ENCODE measurements at regions of chr11 and their contacts with region 1.

Region 1: DNA sequence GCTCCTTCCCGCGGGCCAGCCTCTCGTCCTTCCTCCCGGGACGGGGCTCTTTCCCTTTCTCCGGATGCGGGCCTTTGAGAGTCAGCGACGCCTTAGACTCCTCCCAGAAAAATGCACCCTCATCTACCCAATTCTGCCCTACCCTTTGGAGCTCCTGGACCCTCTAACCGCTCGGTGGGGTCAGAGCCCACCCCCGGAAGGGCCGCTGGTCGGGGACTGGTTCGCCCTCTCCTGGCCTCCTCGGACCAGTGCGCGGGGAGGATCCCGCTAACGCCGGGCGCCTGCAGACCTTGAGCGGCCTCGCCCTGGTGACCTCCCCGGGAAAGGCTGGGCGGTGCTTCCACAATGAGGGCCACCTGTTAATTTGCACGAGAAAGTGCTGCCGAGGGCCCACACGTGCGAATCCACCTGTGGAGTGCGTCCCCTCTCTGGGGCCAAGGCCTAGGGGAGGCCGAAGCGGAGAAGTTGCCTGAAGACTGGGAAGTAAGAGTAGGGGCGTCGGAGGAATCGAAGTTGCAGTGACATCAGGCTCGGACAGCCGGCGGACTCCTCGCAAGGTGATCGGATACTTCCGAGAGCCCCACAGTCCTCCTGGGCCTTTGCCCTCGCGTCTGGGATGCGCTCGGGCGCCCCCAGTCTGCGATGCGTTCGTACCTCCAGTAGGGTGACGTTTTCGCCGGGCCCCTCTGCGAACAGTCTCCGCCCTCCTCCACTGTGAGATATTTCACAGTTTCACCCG is 61.5 kb downstream of the ENDOD1 start:
- DNase-seq: peak; percentile 83 to 96 (median 91)
- ATAC-seq: peak; percentile 94
- H3K4me3 ChIP-seq: peak overlapping the region; percentile 64 to 82
- H3K4me3 Mint-ChIP-seq: peak overlapping the region; percentile 85
- H3K27ac ChIP-seq: peak overlapping the region; percentile 66 to 69
- H3K27ac Mint-ChIP-seq: peak overlapping the region; percentile 91
- H3K4me1 ChIP-seq: peaks cover 24% of the 10 kb centered on the region
- H3K4me1 Mint-ChIP-seq: peaks cover 35% of the 10 kb centered on the region
- H3K27me3 ChIP-seq: no peaks in the 10 kb centered on the region
- H3K27me3 Mint-ChIP-seq: peaks cover 4% of the 10 kb centered on the region
- CTCF ChIP-seq: peak; percentile 92

Region 2: DNA sequence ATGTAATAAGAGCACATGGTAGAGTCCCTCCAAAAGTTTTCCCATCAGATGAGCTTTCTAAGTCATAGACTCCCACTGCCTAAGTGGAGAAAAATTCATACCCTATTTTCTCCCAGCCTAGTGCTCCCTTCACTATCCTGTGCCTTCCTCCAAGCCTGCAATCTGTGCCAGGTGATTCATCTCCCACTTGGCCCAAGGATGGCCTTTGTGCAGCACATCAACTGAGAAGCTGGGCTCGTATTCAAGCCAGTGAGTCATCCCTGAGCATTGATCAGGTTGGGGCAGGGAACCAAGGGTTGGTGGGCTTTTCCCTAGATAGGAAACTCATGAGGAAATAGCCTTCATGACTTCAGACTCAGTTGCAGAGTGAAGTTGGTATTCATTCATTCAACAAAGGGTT is 957.8 kb before region 1 on chr11:
- CTCF ChIA-PET with region 1: no interaction called
- POLR2A ChIA-PET with region 1: no interaction called
- intact Hi-C with region 1: no loop called
- DNase-seq: no peak
- ATAC-seq: no peak
- H3K4me3 ChIP-seq: no peak overlapping the region
- H3K4me3 Mint-ChIP-seq: no peak overlapping the region
- H3K27ac ChIP-seq: no peak overlapping the region
- H3K27ac Mint-ChIP-seq: no peak overlapping the region
- H3K4me1 ChIP-seq: no peaks in the 10 kb centered on the region
- H3K4me1 Mint-ChIP-seq: no peaks in the 10 kb centered on the region
- H3K27me3 ChIP-seq: no peaks in the 10 kb centered on the region
- H3K27me3 Mint-ChIP-seq: no peaks in the 10 kb centered on the region
- CTCF ChIP-seq: no peak

Region 3: DNA sequence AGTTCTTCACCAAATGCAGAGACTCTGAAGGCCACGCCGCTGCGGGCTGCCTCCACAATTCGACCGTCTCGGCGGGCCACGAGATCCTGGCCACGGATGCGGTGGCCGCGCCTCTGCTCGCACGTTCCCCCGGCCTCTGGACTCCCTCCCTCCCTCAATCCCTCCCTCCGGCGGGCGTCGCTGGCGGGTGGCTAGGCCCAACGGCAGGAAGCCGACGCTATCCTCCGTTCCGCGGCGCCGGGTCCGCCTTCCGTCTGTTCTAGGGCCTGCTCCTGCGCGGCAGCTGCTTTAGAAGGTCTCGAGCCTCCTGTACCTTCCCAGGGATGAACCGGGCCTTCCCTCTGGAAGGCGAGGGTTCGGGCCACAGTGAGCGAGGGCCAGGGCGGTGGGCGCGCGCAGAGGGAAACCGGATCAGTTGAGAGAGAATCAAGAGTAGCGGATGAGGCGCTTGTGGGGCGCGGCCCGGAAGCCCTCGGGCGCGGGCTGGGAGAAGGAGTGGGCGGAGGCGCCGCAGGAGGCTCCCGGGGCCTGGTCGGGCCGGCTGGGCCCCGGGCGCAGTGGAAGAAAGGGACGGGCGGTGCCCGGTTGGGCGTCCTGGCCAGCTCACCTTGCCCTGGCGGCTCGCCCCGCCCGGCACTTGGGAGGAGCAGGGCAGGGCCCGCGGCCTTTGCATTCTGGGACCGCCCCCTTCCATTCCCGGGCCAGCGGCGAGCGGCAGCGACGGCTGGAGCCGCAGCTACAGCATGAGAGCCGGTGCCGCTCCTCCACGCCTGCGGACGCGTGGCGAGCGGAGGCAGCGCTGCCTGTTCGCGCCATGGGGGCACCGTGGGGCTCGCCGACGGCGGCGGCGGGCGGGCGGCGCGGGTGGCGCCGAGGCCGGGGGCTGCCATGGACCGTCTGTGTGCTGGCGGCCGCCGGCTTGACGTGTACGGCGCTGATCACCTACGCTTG is 607.1 kb before region 1 on chr11 and contains the start of gene FUT4:
- CTCF ChIA-PET with region 1: no interaction called
- POLR2A ChIA-PET with region 1: no interaction called
- intact Hi-C with region 1: loop called in 1 of 2 experiments (anchors 10 kb)
- DNase-seq: peak; percentile 26 to 82 (median 69)
- ATAC-seq: peak; percentile 76
- H3K4me3 ChIP-seq: peak within 1 kb of the TSS; percentile 65 to 77
- H3K4me3 Mint-ChIP-seq: peak within 1 kb of the TSS; percentile 99
- H3K27ac ChIP-seq: peak within 1 kb of the TSS; percentile 87 to 90
- H3K27ac Mint-ChIP-seq: peak within 1 kb of the TSS; percentile 100
- H3K4me1 ChIP-seq: peaks cover 22% of the 10 kb centered on the region
- H3K4me1 Mint-ChIP-seq: peaks cover 39% of the 10 kb centered on the region
- H3K27me3 ChIP-seq: no peaks in the 10 kb centered on the region
- H3K27me3 Mint-ChIP-seq: no peaks in the 10 kb centered on the region
- CTCF ChIP-seq: no peak
- total RNA-seq, gene FUT4: 4.7 to 5.2 TPM

Region 4: DNA sequence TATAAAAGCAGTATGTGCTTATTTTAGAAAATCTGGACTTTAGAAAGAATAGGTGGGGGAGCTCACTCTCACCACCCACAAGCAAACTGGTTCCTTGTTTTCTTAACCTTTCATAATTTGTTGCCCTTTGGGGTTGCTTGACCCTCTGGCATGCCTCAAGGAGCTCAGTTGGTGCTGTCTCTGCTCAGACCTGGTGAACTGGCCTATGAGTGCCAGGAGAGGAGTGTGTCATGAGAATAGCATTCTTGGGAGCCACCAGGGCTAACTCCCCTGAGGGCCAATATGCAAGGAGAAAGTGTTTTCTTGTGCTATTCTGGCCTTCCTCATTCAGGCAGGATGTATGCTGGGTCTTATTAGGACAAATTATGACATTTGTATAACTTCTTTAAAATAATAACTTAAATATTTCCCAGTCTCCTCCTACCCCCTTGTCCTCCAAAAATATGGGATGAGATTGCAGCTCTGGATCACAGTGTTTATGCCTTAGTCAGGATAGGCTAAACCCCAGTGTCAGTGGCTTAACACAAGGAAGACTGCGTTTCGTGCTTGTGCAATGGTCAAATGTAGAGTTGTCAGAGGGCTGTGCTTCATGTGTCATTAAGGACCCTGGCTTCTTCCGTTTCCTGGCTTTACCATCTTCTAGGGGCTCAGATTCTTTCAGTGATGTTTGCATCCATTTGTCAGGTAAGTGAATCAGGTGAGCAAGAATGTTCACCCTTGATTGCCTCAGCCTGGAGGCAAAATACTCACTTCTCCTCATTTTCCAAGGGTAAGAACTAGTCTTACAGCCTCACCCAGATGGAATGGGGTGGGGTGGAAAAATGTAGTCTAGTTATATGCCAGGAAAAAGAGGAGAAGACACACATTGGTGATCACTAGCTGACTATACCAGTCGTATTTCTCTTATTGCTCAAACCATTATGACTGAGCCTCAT is 403.7 kb before region 1 on chr11:
- CTCF ChIA-PET with region 1: no interaction called
- POLR2A ChIA-PET with region 1: no interaction called
- intact Hi-C with region 1: no loop called
- DNase-seq: no peak
- ATAC-seq: no peak
- H3K4me3 ChIP-seq: no peak overlapping the region
- H3K4me3 Mint-ChIP-seq: no peak overlapping the region
- H3K27ac ChIP-seq: no peak overlapping the region
- H3K27ac Mint-ChIP-seq: no peak overlapping the region
- H3K4me1 ChIP-seq: no peaks in the 10 kb centered on the region
- H3K4me1 Mint-ChIP-seq: no peaks in the 10 kb centered on the region
- H3K27me3 ChIP-seq: no peaks in the 10 kb centered on the region
- H3K27me3 Mint-ChIP-seq: peaks cover 39% of the 10 kb centered on the region
- CTCF ChIP-seq: no peak

Region 5: DNA sequence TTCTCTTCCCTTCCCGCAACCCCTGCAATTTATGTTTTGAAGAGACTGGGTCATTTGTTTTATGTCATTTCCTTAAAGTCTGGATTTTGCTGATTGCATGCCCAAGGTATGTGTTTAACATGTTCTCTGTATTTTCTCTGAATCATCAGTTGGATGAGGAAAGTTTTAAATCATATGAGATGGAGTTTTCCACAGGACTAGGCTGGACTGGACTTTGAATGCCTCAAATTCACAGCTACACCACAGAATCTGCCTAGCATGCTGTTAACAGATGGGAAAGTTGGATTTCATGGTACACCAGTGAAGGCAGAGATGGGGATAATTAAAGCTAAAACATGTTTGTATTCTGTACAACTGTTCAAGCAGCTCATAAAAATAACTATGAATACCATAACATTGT is 240.3 kb before region 1 on chr11:
- CTCF ChIA-PET with region 1: no interaction called
- POLR2A ChIA-PET with region 1: no interaction called
- intact Hi-C with region 1: no loop called
- DNase-seq: no peak
- ATAC-seq: no peak
- H3K4me3 ChIP-seq: no peak overlapping the region
- H3K4me3 Mint-ChIP-seq: no peak overlapping the region
- H3K27ac ChIP-seq: no peak overlapping the region
- H3K27ac Mint-ChIP-seq: no peak overlapping the region
- H3K4me1 ChIP-seq: no peaks in the 10 kb centered on the region
- H3K4me1 Mint-ChIP-seq: no peaks in the 10 kb centered on the region
- H3K27me3 ChIP-seq: no peaks in the 10 kb centered on the region
- H3K27me3 Mint-ChIP-seq: no peaks in the 10 kb centered on the region
- CTCF ChIP-seq: no peak

Region 6: GRCh38 chr11:95089620-95090542 is 61.2 kb before region 1 on chr11 and contains the start of gene ENDOD1:
- CTCF ChIA-PET with region 1: interaction called, 10 read pairs
- POLR2A ChIA-PET with region 1: interaction called, 20 read pairs
- intact Hi-C with region 1: loop called (anchors 1 kb)
- DNase-seq: peak; percentile 75 to 92 (median 83)
- ATAC-seq: peak; percentile 94
- H3K4me3 ChIP-seq: peak within 1 kb of the TSS; percentile 66 to 78
- H3K4me3 Mint-ChIP-seq: peak within 1 kb of the TSS; percentile 93
- H3K27ac ChIP-seq: peak within 1 kb of the TSS; percentile 77 to 84
- H3K27ac Mint-ChIP-seq: peak within 1 kb of the TSS; percentile 99
- H3K4me1 ChIP-seq: peaks cover 25% of the 10 kb centered on the region
- H3K4me1 Mint-ChIP-seq: peaks cover 50% of the 10 kb centered on the region
- H3K27me3 ChIP-seq: no peaks in the 10 kb centered on the region
- H3K27me3 Mint-ChIP-seq: no peaks in the 10 kb centered on the region
- CTCF ChIP-seq: no peak
- total RNA-seq, gene ENDOD1: 5.6 to 5.9 TPM

Region 7: GRCh38 chr11:95725196-95725595 is 574.1 kb after region 1 on chr11:
- CTCF ChIA-PET with region 1: interaction called, 11 read pairs
- POLR2A ChIA-PET with region 1: no interaction called
- intact Hi-C with region 1: no loop called
- DNase-seq: no peak
- ATAC-seq: no peak
- H3K4me3 ChIP-seq: no peak overlapping the region
- H3K4me3 Mint-ChIP-seq: no peak overlapping the region
- H3K27ac ChIP-seq: no peak overlapping the region
- H3K27ac Mint-ChIP-seq: no peak overlapping the region
- H3K4me1 ChIP-seq: no peaks in the 10 kb centered on the region
- H3K4me1 Mint-ChIP-seq: peaks cover 4% of the 10 kb centered on the region
- H3K27me3 ChIP-seq: no peaks in the 10 kb centered on the region
- H3K27me3 Mint-ChIP-seq: peaks cover 4% of the 10 kb centered on the region
- CTCF ChIP-seq: no peak

Region 8: DNA sequence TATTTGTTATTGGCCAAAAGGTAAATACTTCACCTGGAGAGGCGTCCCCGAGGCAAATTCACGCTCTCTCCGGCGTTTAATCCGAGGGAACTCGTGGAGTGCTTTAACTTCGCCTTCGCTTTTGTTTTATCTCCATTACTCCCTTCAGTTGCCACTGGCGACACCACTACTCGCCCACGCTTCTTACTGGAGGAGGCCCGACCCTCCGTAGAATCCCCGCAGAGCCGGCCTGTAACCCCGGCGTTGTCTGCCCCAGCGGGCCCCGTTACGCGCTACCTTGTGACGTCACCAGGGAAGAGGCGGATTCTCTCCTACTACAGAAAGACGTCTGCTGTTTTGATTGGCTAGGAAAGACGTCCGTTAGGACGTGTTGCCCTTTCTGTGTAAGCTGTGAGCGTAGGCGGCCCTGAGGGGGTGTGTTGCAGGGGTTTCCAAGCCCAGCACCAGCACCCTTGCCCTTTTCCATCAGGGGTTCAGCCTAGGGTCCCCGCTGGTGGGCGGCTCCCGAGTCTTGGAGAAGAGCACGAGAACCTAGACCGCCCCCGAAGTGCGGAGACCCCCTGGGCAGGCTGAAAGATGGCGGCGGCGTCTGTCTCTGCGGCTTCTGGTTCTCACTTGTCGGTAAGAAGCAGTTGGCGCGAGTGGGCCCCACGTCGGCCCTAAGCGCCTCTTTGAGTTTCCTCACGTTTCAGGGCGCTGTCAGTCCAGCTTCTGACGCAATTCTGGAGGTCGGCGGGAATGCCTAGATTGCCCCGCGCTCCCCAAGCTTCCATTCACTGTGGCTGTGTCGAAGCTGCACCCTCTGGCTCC is 639.2 kb after region 1 on chr11 and contains the start of gene CEP57:
- CTCF ChIA-PET with region 1: interaction called, 7 read pairs
- POLR2A ChIA-PET with region 1: interaction called, 10 read pairs
- intact Hi-C with region 1: loop called (anchors 1 to 2 kb)
- DNase-seq: peak; percentile 80 to 98 (median 94)
- ATAC-seq: peak; percentile 54
- H3K4me3 ChIP-seq: peak within 1 kb of the TSS; percentile 86 to 93
- H3K4me3 Mint-ChIP-seq: peak within 1 kb of the TSS; percentile 99
- H3K27ac ChIP-seq: peak within 1 kb of the TSS; percentile 99 to 100
- H3K27ac Mint-ChIP-seq: peak within 1 kb of the TSS; percentile 100
- H3K4me1 ChIP-seq: peaks cover 29% of the 10 kb centered on the region
- H3K4me1 Mint-ChIP-seq: peaks cover 63% of the 10 kb centered on the region
- H3K27me3 ChIP-seq: no peaks in the 10 kb centered on the region
- H3K27me3 Mint-ChIP-seq: no peaks in the 10 kb centered on the region
- CTCF ChIP-seq: no peak
- total RNA-seq, gene CEP57: 53.2 to 53.7 TPM

Region 9: GRCh38 chr11:96424693-96425092 is 1273.6 kb after region 1 on chr11:
- CTCF ChIA-PET with region 1: interaction called, 8 read pairs
- POLR2A ChIA-PET with region 1: no interaction called
- intact Hi-C with region 1: loop called (anchors 1 kb)
- DNase-seq: no peak
- ATAC-seq: no peak
- H3K4me3 ChIP-seq: no peak overlapping the region
- H3K4me3 Mint-ChIP-seq: no peak overlapping the region
- H3K27ac ChIP-seq: no peak overlapping the region
- H3K27ac Mint-ChIP-seq: no peak overlapping the region
- H3K4me1 ChIP-seq: no peaks in the 10 kb centered on the region
- H3K4me1 Mint-ChIP-seq: no peaks in the 10 kb centered on the region
- H3K27me3 ChIP-seq: no peaks in the 10 kb centered on the region
- H3K27me3 Mint-ChIP-seq: peaks cover 28% of the 10 kb centered on the region
- CTCF ChIP-seq: no peak

Measured in CD8-positive, alpha-beta T cell (primary cell).